Activated T-helper 2 cell treated with anti-CD3 and anti-CD28 coated beads, Interferon-gamma antibody, Interleukin-2, Interleukin-4, amounts not matched to agents 10 μg/mL and 5 μg/mL and 100 μg/mL, durations not matched to agents 14 hours and 24 hours and 36 hours (primary cell): ENCODE measurements at regions of chr2 and their contacts with region 1.

Region 1: DNA sequence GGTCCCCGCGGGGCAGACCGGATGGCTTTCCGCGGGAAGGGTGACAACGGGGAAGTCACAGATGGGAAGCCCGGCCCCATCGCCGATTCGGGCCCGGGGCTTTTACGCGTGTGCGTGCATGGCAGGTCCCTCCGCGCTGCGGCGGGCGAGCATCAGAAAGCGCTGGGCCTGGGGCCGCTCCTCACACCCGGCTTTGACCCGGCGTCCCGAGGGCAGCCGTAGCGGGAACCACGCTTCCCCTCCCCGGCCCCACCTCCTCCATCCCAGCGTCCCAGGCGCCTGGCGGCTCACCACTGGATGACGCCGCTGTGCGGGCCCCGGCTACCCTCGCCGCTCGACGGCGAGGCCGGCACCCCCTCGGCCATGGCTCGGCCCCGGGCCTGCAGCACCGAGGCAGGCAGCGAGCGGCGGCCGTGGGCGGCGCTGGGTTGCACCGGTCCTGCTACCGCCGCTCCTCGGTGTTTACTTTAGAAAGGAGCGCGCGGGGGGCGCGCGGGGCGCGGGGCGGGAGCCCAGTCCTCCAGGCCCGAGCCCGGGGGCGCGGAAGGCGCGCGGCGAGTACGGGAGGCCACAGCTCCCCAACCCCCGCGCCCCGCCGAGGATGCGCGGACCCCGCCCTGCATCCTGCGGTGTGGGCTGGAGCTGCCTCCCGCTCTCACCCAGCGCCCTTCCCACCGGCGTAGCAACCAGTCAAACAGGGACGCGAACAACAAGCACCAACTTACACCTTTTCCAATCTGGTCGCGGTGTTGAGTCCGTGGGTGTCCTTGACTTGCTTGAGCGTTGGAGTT is 806 bp downstream of the RFX8 start:
- DNase-seq: peak; percentile 62
- H3K4me3 Mint-ChIP-seq: peak overlapping the region; percentile 81
- H3K27ac Mint-ChIP-seq: peak overlapping the region; percentile 90
- H3K4me1 Mint-ChIP-seq: peaks cover 40% of the 10 kb centered on the region
- H3K27me3 Mint-ChIP-seq: no peaks in the 10 kb centered on the region

Region 2: GRCh38 chr2:101252408-101253012 is 221.6 kb before region 1 on chr2 and contains the start of gene CNOT11:
- intact Hi-C with region 1: loop called (anchors 10 kb)
- DNase-seq: peak; percentile 98
- H3K4me3 Mint-ChIP-seq: peak within 1 kb of the TSS; percentile 96
- H3K27ac Mint-ChIP-seq: peak within 1 kb of the TSS; percentile 95
- H3K4me1 Mint-ChIP-seq: peaks cover 34% of the 10 kb centered on the region
- H3K27me3 Mint-ChIP-seq: no peaks in the 10 kb centered on the region
- total RNA-seq, gene CNOT11: 64.0 and 77.6 TPM in 2 replicates

Region 3: GRCh38 chr2:101446869-101447268 is 27.2 kb before region 1 on chr2:
- intact Hi-C with region 1: loop called (anchors 2 kb)
- DNase-seq: no peak
- H3K4me3 Mint-ChIP-seq: no peak overlapping the region
- H3K27ac Mint-ChIP-seq: no peak overlapping the region
- H3K4me1 Mint-ChIP-seq: peaks cover 27% of the 10 kb centered on the region
- H3K27me3 Mint-ChIP-seq: no peaks in the 10 kb centered on the region

Region 4: GRCh38 chr2:101463891-101464641 is 10.0 kb before region 1 on chr2:
- intact Hi-C with region 1: no loop called
- DNase-seq: no peak
- H3K4me3 Mint-ChIP-seq: no peak overlapping the region
- H3K27ac Mint-ChIP-seq: no peak overlapping the region
- H3K4me1 Mint-ChIP-seq: peaks cover 14% of the 10 kb centered on the region
- H3K27me3 Mint-ChIP-seq: no peaks in the 10 kb centered on the region

Region 5: GRCh38 chr2:101697124-101698013 is 223.3 kb after region 1 on chr2 and contains the start of gene MAP4K4:
- intact Hi-C with region 1: loop called (anchors 2 kb)
- DNase-seq: peak; percentile 69
- H3K4me3 Mint-ChIP-seq: peak within 1 kb of the TSS; percentile 84
- H3K27ac Mint-ChIP-seq: peak within 1 kb of the TSS; percentile 83
- H3K4me1 Mint-ChIP-seq: peaks cover 21% of the 10 kb centered on the region
- H3K27me3 Mint-ChIP-seq: no peaks in the 10 kb centered on the region
- total RNA-seq, gene MAP4K4: 36.8 and 40.6 TPM in 2 replicates

Region 6: GRCh38 chr2:101823347-101823791 is 349.3 kb after region 1 on chr2:
- intact Hi-C with region 1: loop called (anchors 5 kb)
- DNase-seq: peak; percentile 51
- H3K4me3 Mint-ChIP-seq: peak overlapping the region; percentile 18
- H3K27ac Mint-ChIP-seq: peak overlapping the region; percentile 21
- H3K4me1 Mint-ChIP-seq: peaks cover 63% of the 10 kb centered on the region
- H3K27me3 Mint-ChIP-seq: no peaks in the 10 kb centered on the region